Astrocyte of the cerebellum (primary cell): ENCODE measurements at regions of chr4 and their contacts with region 1.

Region 1: GRCh38 chr4:147778942-147779341 is 47.1 kb downstream of the ARHGAP10 start:
- DNase-seq: no peak
- H3K4me3 ChIP-seq: no peak overlapping the region
- CTCF ChIP-seq: no peak

Region 2: DNA sequence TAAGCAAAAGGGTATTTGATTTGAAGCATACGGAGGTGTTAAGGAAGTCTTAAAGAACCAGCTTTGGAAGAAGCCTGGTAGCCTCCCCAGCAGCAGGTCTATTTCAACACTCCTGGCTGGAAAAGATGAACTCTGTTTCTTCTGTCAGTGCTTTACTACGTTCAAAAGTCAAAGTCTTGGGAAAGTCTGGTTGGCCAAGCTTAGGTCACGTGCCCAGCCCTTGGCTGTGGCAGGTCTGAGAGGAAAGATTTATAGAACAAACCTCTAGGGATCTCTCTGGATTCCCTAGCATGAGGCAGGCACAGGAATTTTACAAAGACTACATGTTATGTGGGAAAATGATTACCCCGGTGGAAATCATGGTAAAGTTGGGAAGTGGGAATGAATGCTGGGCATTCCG is 55.6 kb before region 1 on chr4:
- in situ Hi-C with region 1: loop called (anchors 5 kb)
- DNase-seq: no peak
- H3K4me3 ChIP-seq: no peak overlapping the region
- CTCF ChIP-seq: no peak